AG04449 (cell line): ENCODE measurements at regions of chr10 and their contacts with region 1.

Region 1: DNA sequence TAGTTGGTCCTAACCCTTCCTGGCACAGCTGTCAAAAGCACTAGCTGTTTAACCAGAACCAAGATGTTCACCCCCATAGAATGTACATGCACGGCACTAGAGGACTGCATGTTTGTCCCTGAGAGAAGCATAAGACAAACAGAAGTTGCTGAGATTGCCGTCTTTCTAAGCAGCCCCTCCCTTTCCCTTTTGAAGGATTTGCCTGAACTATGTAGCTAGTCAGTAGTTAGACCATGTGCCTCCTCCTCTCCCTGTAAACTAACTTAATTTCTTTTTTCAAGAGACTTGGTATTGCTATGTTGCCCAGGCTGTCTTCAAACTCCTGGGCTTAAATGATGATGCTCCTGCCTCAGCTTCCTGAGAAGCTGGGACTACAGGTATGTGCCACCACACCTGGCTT is 40.7 kb downstream of the TBC1D12 start:
- DNase-seq: no peak
- H3K4me3 ChIP-seq: no peak overlapping the region
- CTCF ChIP-seq: no peak

Region 2: DNA sequence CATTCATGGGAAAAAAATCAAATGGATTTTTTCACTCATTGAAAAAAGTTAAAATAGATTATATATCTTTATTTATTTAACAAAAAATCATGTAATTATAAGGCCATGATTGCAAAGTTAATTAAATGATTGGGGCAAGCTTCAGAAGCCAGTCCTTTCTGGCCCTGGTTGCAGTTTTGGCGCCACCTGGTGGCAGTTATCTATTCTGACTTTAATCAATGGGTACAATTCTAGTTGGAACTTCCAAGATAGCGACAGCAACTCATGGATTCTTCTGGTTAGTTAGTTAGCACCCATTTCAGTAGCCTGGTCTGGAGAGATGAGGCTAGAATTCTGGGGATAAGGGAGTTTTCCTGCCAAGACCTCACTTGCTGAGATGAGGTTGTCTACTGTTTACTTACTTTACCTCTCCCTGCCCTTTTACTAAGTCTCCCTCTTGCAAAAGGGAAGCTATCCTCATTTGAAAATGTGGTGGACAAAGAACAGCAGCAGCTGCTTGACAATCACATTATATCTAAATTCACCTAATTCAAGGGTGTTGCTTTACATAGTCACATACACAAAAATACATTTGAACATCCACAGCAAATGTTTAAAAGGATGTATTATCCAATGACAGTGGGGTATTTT is 122.6 kb before region 1 on chr10:
- CTCF ChIA-PET with region 1: interaction called, 77 read pairs
- POLR2A ChIA-PET with region 1: no interaction called
- DNase-seq: no peak
- H3K4me3 ChIP-seq: no peak overlapping the region
- CTCF ChIP-seq: peak; percentile 55

Region 3: DNA sequence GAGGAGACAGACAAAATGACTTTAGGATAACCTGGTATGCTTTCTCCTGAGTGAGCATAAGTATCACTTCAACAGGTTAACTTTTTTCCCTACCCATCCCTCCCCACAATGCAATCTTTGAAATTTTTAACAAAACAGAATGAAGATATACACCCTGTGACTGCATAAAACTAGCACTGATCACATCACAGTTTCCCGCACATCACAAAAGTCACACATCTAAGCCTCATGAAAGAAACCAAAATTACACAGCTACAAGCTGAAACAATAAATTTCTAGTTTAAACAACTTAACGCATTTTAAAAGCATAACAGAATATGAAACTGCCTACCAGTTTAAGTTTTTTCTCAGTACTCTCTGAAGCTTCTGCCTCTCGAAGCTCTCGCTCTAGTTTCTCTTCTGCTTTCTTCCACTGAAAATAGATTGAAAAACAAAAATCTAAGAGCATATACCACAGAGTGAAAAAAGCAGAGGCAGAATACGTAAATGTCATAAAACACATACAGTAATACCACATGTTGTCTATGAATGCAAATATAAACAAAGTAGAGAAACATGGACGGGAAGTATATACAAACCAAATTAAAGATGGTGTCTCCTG is 98.4 kb before region 1 on chr10:
- CTCF ChIA-PET with region 1: interaction called, 21 read pairs
- POLR2A ChIA-PET with region 1: no interaction called
- DNase-seq: no peak
- H3K4me3 ChIP-seq: no peak overlapping the region
- CTCF ChIP-seq: no peak

Region 4: DNA sequence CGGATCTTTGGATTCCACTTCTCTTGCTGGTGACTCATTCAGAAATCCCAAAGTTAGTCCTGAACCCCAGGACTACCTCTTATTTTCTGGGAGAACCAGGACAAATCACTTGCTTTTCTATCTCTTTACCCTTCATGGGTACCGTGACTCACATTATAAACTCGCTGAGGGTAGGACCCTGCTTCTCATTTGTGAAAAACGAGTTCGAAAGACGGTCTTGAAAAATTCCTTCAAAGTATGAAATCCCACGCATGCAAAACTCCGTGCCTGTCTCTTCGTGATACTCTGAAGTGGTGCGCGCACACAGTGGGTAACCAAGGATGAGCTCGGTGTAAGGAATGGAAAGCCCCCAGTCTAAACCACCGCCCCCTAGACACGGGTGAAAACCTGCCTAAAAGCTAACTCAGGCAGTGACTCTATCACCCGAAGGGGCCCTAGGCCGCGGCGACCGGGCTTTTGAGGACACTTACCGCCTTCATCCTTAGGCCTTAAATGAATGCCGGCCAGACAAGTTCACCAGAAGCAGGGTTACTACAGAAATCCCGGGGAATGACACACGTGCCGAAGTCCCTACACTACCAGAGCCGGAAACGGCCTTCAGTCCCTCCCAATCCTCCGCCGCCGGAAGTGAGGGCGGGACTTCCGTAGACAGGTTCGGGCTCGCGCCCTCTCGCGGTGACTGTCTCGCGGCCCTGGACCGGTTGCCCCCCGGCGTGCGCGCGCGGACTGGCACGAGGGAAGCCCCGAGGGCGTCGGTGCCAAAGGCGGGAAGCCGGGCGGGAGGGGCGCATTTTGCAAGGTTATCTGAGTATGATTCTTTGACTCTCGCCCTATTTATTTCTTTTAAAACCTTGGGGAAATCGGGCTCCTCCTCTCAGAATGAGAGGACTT is 80.4 kb before region 1 on chr10 and contains the start of gene NOC3L:
- CTCF ChIA-PET with region 1: interaction called, 41 read pairs
- POLR2A ChIA-PET with region 1: no interaction called
- DNase-seq: peak; percentile 53
- H3K4me3 ChIP-seq: peak within 1 kb of the TSS; percentile 66
- CTCF ChIP-seq: peak; percentile 95

Region 5: GRCh38 chr10:94402015-94402842 is 40.8 kb before region 1 on chr10 and contains the start of gene TBC1D12:
- CTCF ChIA-PET with region 1: interaction called, 15 read pairs
- POLR2A ChIA-PET with region 1: no interaction called
- DNase-seq: peak; percentile 75
- H3K4me3 ChIP-seq: peak within 1 kb of the TSS; percentile 81
- CTCF ChIP-seq: no peak

Region 6: DNA sequence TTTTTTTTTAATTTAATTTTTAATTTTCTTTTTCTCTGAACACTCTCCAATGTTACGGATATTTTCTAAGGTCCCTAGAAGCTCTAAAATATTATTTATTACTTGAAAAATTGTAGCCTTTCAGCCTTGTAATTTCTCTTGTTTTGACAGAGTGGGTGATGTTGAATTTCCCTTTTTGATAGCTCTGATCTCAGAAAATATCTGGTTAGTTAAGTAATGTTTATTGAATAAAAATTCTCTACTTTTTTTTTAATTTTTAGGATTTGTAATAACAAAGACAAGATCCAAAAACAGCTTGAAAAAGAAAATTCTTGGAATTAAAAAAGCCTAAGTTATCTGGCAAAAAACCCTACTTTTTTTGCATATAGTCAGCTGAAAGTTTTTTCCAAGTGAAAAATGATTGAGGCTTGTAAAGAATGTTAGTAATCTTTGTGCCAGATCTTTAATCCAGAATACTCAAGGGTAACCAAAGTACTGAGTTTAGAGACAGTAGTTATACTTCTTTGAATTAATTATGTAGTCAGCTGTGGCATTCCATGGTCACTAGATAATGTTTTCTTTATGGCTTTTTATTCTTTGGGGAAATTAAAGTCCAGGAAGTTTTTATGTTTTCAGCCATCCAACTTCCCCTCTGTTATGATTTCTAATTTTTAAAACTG is 13.9 kb before region 1 on chr10:
- CTCF ChIA-PET with region 1: interaction called, 62 read pairs
- POLR2A ChIA-PET with region 1: no interaction called
- DNase-seq: peak; percentile 80
- H3K4me3 ChIP-seq: no peak overlapping the region
- CTCF ChIP-seq: no peak

Region 7: GRCh38 chr10:94462130-94462529 is 19.1 kb after region 1 on chr10:
- CTCF ChIA-PET with region 1: interaction called, 28 read pairs
- POLR2A ChIA-PET with region 1: no interaction called
- DNase-seq: no peak
- H3K4me3 ChIP-seq: no peak overlapping the region
- CTCF ChIP-seq: no peak

Region 8: DNA sequence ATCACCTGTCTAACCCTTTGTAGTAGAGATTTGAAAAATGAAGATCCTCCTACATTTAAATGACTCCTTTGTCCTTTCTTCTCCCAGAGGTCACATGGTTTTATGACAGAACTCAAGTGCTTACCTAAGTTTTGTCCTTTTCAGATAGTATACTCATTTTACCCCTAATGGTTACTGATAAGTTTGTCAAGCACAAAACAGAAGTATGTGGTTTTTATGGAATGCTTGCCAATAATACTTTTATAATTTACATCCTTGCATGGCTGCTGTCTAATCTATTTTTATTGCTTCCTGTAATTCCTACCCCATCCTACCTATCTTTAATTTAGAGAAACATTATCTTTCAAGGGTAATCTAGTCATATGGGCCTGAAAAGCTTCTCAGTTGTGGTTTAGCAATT is 140.1 kb after region 1 on chr10:
- CTCF ChIA-PET with region 1: no interaction called
- POLR2A ChIA-PET with region 1: no interaction called
- DNase-seq: no peak
- H3K4me3 ChIP-seq: no peak overlapping the region
- CTCF ChIP-seq: no peak